ENCODE measurements at regions of chr7 and their contacts with region 1.

Region 1: GRCh38 chr7:99910976-99911375 is 8.4 kb downstream of the TRIM4 start:
- DNase-seq: no peak
- H3K4me3 ChIP-seq: no peak overlapping the region
- H3K27ac ChIP-seq: no peak overlapping the region
- H3K4me1 ChIP-seq: peaks cover 0 to 11% of the 10 kb centered on the region in 2 donors
- H3K27me3 ChIP-seq: no peaks in the 10 kb centered on the region
- CTCF ChIP-seq: no peak
- POLR2A ChIP-seq: no peak

Region 2: GRCh38 chr7:99985444-99985843 is 74.5 kb after region 1 on chr7:
- intact Hi-C with region 1: loop called in 1 of 2 experiments (anchors 5 kb)
- DNase-seq: no peak
- H3K4me3 ChIP-seq: no peak overlapping the region
- H3K27ac ChIP-seq: no peak overlapping the region
- H3K4me1 ChIP-seq: no peaks in the 10 kb centered on the region
- H3K27me3 ChIP-seq: no peaks in the 10 kb centered on the region
- CTCF ChIP-seq: no peak
- POLR2A ChIP-seq: no peak